Dorsolateral prefrontal cortex (tissue), 120 donors: ENCODE measurements at regions of chr3 and their contacts with region 1.

Region 1: DNA sequence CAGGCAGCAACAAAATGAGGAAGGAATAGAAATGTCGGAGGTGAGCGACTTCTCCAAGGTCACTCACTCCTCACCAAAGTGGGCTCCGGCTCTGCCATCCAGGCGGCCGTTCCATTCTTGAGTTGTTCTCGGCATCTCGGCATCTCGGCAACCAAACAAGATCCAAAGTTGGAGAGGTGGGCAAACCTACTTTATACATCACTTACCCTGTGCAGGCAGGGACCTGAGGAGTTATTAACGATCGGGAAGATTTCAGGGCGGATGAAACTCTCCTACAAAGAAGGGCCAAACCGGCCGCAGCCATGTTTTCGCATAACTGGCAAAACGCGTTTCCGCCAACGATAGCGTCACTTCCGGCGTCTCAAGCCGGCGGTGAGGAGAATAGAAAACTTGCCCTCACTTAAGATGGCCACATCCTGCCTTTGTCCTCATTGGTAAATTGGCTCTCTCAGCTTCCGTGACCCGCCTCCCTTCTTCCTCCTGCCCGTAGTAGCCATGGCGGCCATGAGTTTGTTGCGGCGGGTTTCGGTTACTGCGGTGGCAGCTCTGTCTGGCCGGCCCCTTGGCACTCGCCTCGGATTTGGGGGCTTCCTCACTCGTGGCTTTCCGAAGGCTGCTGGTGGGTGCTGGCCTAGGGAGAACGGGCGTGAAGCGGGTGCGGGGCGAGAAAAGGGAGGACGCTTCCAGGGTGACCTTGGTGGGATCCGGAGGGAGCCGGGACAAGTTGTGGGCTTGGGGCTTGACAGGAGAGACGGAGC is at the starts of genes MRPL47 and NDUFB5:
- DNase-seq: peak; percentile 93 to 98 (median 96)
- H3K4me3 ChIP-seq: peak within 1 kb of the TSS; percentile 57 to 100 (median 87)
- H3K27ac ChIP-seq: peak within 1 kb of the TSS; percentile 66 to 98 (median 89)
- H3K27me3 ChIP-seq: no peaks in the 10 kb centered on the region
- CTCF ChIP-seq: peak in 30 of 56 donors; percentile 6 to 55 (median 29)
- total RNA-seq, gene MRPL47: 15.4 to 40.1 (median 29.3) TPM
- total RNA-seq, gene NDUFB5: 67.8 to 191 (median 127) TPM

Region 2: GRCh38 chr3:179347345-179348194 is 256.9 kb before region 1 on chr3 and contains the start of gene MFN1:
- intact Hi-C with region 1: loop called (anchors 5 kb)
- DNase-seq: peak; percentile 84 to 97 (median 95)
- H3K4me3 ChIP-seq: peak within 1 kb of the TSS; percentile 62 to 99 (median 85)
- H3K27ac ChIP-seq: peak within 1 kb of the TSS in 57 of 59 donors; percentile 27 to 92 (median 85)
- H3K27me3 ChIP-seq: no peaks in the 10 kb centered on the region
- CTCF ChIP-seq: peak in 28 of 56 donors; percentile 3 to 49 (median 25)
- total RNA-seq, gene MFN1: 33.7 to 79.8 (median 60.2) TPM

Region 3: DNA sequence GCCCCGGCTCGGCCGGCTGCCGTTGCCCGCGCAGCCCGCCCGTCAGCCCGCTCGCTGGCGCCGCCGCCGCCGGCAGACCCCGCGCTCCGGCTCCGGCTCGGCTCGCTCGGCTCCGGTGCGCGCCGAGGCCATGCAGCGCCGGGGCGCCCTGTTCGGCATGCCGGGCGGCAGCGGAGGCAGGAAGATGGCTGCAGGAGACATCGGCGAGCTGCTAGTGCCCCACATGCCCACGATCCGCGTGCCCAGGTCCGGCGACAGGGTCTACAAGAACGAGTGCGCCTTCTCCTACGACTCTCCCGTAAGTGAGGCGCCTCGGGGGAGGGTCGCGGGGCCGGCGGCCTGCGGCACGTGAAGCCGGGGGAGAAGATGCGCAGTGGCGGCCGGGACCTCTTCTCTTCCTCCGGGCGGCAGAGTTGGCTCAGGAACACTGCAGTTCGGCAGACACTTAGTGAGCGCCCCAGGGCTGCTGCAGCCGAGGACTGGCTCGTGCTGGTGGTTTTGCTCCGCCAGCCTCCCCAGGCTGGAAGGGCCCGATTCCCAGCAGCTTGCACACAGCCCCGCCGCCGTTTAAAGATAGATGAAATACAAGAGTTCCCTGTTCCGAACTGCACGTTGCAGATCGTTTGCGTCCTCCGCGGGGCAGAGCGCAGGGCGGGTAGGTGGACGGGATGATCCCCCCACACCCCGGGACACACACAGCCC is 48.7 kb after region 1 on chr3:
- intact Hi-C with region 1: loop called (anchors 2 kb)
- DNase-seq: peak; percentile 54 to 84 (median 77)
- H3K4me3 ChIP-seq: peak overlapping the region; percentile 67 to 94 (median 84)
- H3K27ac ChIP-seq: peak overlapping the region; percentile 72 to 99 (median 96)
- H3K27me3 ChIP-seq: no peaks in the 10 kb centered on the region
- CTCF ChIP-seq: peak in 25 of 56 donors; percentile 10 to 48 (median 23)

Region 4: GRCh38 chr3:179743913-179744312 is 139.4 kb after region 1 on chr3:
- intact Hi-C with region 1: no loop called
- DNase-seq: no peak
- H3K4me3 ChIP-seq: no peak overlapping the region
- H3K27ac ChIP-seq: no peak overlapping the region
- H3K27me3 ChIP-seq: no peaks in the 10 kb centered on the region
- CTCF ChIP-seq: no peak